ENCODE measurements at regions of chr7 and their contacts with region 1.

Region 1: GRCh38 chr7:1044191-1045068 is at the start of gene GPR146:
- DNase-seq: peak; percentile 97
- ATAC-seq: peak; percentile 90 to 92
- H3K4me3 ChIP-seq: peak within 1 kb of the TSS; percentile 65 to 95 (median 78)
- H3K27ac ChIP-seq: peak within 1 kb of the TSS; percentile 92 to 97 (median 96)
- H3K4me1 ChIP-seq: peaks cover 44 to 49% of the 10 kb centered on the region in 2 donors
- H3K27me3 ChIP-seq: no peaks in the 10 kb centered on the region
- CTCF ChIP-seq: peak; percentile 67 to 81 (median 73)
- POLR2A ChIP-seq: peak; percentile 67 to 77
- total RNA-seq, gene GPR146: 23.3 to 43.8 (median 29.5) TPM

Region 2: GRCh38 chr7:992709-993607 is 51.5 kb before region 1 on chr7:
- in situ Hi-C with region 1: loop called in 1 of 4 experiments (anchors 10 kb)
- intact Hi-C with region 1: loop called (anchors 1 kb)
- DNase-seq: peak; percentile 92
- ATAC-seq: peak; percentile 94 to 97
- H3K4me3 ChIP-seq: no peak overlapping the region
- H3K27ac ChIP-seq: no peak overlapping the region
- H3K4me1 ChIP-seq: peaks cover 3% of the 10 kb centered on the region in 2 donors
- H3K27me3 ChIP-seq: peaks cover 28 to 46% (median 44%) of the 10 kb centered on the region in 3 donors
- CTCF ChIP-seq: peak; percentile 99 to 100 (median 100)
- POLR2A ChIP-seq: no peak

Region 3: GRCh38 chr7:1028031-1028770 is 16.2 kb before region 1 on chr7:
- in situ Hi-C with region 1: no loop called
- intact Hi-C with region 1: loop called (anchors 1 kb)
- DNase-seq: peak; percentile 76 to 85
- ATAC-seq: peak; percentile 81 to 88
- H3K4me3 ChIP-seq: peak overlapping the region; percentile 62 to 91 (median 74)
- H3K27ac ChIP-seq: peak overlapping the region; percentile 93 to 98 (median 97)
- H3K4me1 ChIP-seq: peaks cover 21 to 29% of the 10 kb centered on the region in 2 donors
- H3K27me3 ChIP-seq: no peaks in the 10 kb centered on the region
- CTCF ChIP-seq: no peak
- POLR2A ChIP-seq: peak; percentile 63 to 69

Region 4: DNA sequence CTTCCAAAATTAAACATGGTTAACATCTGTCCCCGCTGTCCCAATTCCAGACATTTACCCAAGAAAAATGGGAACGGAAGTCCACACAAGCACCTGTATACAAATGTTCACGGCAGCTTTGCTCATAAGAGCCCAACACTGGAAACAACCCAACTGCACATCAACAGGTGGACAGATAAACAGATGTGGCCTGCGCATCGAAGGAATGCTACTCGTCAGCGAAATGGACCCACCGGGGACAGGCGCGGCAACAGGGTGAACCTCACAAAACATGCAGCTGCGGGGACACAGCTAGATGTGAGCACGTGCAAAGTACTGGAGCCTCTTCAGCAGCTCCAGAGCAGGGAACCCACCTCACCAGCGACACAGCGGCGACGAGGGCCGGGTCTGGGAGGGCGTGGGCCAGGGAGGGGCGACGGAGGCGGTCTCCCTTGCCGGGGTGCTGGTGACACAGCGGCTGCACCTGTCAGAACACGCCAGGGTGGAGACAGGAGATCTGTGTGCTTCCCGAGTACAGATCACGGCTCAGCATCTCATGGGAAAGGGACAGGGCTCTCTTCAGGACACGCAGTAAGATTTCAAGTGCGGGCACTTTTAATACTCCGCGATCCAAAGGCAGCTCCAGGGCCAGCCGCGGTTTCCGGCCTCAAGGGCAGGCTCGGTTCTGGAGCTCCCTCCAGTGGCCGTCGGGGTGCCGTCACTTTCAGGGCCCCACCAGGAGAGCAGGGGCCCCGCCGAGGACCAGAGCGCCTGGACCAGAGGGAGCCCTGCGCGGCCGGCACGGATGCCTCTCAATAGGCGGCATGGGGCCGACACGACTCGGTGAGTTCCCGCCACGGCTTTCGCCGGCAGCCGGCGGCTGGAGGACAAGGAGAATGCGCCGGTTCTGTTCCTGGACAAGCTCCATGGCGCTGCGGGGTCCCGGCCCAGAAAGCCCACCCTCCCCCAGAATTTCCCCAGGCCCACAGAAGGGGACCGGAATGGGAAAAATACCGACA is 21.1 kb after region 1 on chr7:
- in situ Hi-C with region 1: no loop called
- intact Hi-C with region 1: loop called (anchors 1 kb)
- DNase-seq: peak; percentile 68 to 76
- ATAC-seq: peak; percentile 93 to 94
- H3K4me3 ChIP-seq: peak overlapping the region; percentile 11 to 50 (median 44)
- H3K27ac ChIP-seq: no peak overlapping the region
- H3K4me1 ChIP-seq: peaks cover 6 to 7% of the 10 kb centered on the region in 2 donors
- H3K27me3 ChIP-seq: no peaks in the 10 kb centered on the region
- CTCF ChIP-seq: peak; percentile 94 to 98 (median 97)
- POLR2A ChIP-seq: no peak

Region 5: DNA sequence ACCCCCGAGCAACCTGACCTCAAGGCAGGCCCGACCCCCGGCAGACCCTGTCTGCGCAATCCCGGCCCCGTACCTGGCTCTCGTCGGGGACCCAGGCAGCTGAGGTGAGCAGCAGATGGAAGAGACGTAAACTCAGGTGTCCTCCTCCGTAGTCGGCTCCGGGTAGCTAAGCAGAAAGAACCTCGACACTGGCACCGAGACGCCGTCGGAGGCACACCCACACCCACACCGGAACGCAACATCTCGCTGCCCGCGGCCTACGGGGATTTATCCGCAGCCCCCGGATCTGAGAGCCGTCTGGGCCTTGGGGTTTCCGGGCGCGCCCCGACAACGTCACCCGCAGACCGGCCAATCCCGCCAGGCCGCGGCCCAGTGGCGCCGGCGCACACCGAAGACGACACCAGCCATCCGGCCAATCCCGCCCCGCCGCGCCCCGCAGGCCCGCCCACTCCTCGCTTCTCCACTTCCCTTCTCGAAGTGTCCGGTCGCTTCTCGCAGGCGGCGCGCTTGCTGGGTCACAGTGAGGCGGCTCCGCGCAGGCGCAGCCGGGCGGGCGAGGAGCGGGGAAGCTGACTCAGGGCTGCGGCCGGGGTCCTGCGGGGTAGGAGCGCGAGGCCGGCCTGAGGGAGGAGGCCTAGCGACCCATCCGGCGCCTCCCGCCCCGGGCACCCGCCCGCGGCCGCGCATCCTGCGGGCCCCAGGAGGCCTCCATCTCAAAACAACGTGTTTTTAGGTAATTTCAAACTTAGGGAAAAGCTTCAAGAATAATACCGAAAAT is 115.7 kb after region 1 on chr7 and contains the start of gene ZFAND2A:
- in situ Hi-C with region 1: no loop called
- intact Hi-C with region 1: loop called (anchors 5 kb)
- DNase-seq: peak; percentile 97 to 98
- ATAC-seq: peak; percentile 98
- H3K4me3 ChIP-seq: peak within 1 kb of the TSS; percentile 72 to 100 (median 88)
- H3K27ac ChIP-seq: peak within 1 kb of the TSS; percentile 96 to 99 (median 97)
- H3K4me1 ChIP-seq: peaks cover 18 to 22% of the 10 kb centered on the region in 2 donors
- H3K27me3 ChIP-seq: no peaks in the 10 kb centered on the region
- CTCF ChIP-seq: no peak
- POLR2A ChIP-seq: peak; percentile 93 to 95
- total RNA-seq, gene ZFAND2A: 12.0 to 17.9 (median 14.1) TPM

Region 6: DNA sequence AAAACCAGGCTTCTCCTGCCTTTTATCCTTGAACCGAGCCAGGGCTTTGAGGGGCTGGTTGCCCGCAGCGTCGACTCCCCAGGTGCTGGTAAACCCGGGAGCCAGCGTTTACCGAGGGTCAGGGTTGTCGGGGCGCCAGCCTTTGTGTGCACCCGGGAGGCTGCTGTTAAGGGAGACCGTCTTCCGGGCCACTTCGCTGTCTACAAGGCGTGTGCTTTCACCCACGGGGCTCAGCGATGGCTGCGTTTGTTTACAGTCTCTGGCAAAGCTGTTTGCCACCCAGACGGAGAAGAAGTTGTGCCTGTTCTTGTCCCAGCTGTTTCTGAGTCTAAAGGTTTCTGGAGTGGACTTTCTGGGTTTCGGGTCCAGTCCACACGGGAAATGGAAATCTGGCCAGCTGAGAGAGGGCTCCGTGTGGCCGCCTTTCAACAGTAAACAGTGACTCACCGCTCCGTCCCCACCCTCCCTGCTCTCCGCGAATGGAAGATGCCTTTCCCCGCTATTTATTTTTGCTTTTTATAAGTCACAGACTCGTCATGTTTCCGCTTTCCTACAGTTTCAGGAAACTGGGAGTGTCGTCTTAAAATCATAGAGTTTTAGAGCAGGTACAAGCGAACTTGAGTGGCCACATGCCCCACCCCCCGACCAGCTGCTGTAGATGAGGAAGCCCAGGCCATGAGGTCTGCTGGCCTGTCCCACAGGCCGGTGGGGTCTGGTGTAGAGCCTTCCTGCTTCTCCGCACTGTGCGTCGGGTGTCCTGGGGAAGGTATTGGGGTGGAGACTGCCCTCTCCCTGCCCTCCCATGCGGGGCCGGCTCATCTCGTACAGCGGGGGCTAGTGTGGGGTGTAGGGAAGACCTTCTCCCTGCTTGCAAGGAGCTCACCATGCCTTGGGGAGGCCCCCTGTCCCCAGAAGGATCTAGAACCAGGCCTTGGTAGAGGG is 488.3 kb after region 1 on chr7:
- in situ Hi-C with region 1: no loop called
- intact Hi-C with region 1: loop called (anchors 10 kb)
- DNase-seq: peak; percentile 81 to 83
- ATAC-seq: peak; percentile 48 to 55
- H3K4me3 ChIP-seq: peak overlapping the region; percentile 65 to 78 (median 70)
- H3K27ac ChIP-seq: peak overlapping the region; percentile 98 to 100 (median 99)
- H3K4me1 ChIP-seq: peaks cover 52 to 53% of the 10 kb centered on the region in 2 donors
- H3K27me3 ChIP-seq: no peaks in the 10 kb centered on the region
- CTCF ChIP-seq: no peak
- POLR2A ChIP-seq: peak; percentile 61 to 83

Region 7: GRCh38 chr7:1569833-1570633 is 525.6 kb after region 1 on chr7 and contains the start of gene PSMG3:
- in situ Hi-C with region 1: no loop called
- intact Hi-C with region 1: loop called (anchors 5 kb)
- DNase-seq: peak; percentile 86 to 87
- ATAC-seq: peak; percentile 83 to 84
- H3K4me3 ChIP-seq: peak within 1 kb of the TSS; percentile 77 to 98 (median 90)
- H3K27ac ChIP-seq: peak within 1 kb of the TSS; percentile 93 to 99 (median 94)
- H3K4me1 ChIP-seq: peaks cover 26 to 42% of the 10 kb centered on the region in 2 donors
- H3K27me3 ChIP-seq: no peaks in the 10 kb centered on the region
- CTCF ChIP-seq: peak; percentile 28 to 53 (median 37)
- POLR2A ChIP-seq: peak; percentile 82 to 85
- total RNA-seq, gene PSMG3: 25.4 to 46.4 (median 32.2) TPM

Measured in gastrocnemius medialis (tissue), 4 donors.